SK-N-SH (cell line): ENCODE measurements at regions of chr2 and their contacts with region 1.

Region 1: DNA sequence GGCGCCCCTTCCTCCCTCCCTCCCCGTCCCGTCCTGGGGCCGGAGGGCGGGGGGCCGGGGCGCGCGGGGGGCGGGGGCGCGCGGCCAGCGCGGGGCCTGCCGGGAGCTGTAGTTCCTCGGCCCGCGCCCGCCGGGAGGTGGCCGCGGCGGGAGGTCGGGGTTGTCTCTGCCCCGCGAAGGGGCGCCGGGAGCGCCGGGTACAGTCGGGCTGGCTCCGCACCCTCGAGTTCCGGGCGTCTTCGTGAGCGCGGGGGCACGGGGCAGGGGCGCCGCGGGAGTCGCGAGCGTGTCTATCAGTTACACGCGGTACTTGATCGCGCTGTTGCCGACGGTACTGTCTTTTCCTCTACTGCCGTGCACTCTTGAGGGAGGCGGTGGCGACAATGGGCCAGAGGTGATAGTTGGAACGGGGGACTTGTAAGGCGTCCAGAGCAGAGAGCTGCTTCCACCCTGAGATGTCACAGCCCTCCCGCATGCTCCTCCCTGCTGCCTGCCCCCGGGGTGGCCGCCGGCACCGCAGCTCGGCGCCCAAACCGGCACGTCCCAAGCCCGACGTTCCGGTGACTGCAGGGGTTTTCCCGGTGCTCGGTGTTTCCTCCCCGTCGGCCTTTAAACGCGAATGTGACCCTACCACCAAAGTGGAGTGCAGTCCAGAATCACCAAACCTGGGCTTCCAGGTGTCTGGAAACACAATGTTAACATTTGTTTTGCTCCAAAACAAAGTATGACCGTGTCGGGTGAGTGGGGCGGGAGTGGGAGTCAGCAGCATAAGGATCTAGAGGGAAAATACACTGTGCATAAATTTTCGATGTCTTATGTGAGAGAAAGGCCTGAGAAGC is at the start of gene PRKD3:
- DNase-seq: peak; percentile 99
- H3K4me3 ChIP-seq: peak within 1 kb of the TSS; percentile 92 to 96
- H3K27ac ChIP-seq: peak within 1 kb of the TSS; percentile 74 to 93
- H3K4me1 ChIP-seq: peaks cover 21 to 51% of the 10 kb centered on the region in 2 experiments; a peak in 3 of 4 replicates
- H3K27me3 ChIP-seq: no peaks in the 10 kb centered on the region
- CTCF ChIP-seq: no peak
- EP300 ChIP-seq: no peak
- RAD21 ChIP-seq: no peak
- polyA plus RNA-seq, gene PRKD3: 15.9 and 17.5 TPM in 2 replicates

Region 2: GRCh38 chr2:37306024-37306423 is 19.0 kb before region 1 on chr2:
- CTCF ChIA-PET with region 1: interaction called, 20 read pairs
- POLR2A ChIA-PET with region 1: interaction called, 3 read pairs
- DNase-seq: no peak
- H3K4me3 ChIP-seq: no peak overlapping the region
- H3K27ac ChIP-seq: peak overlapping the region in 1 of 2 experiments; percentile 2; a peak in 1 of 4 replicates
- H3K4me1 ChIP-seq: peaks cover 7 to 15% of the 10 kb centered on the region in 2 experiments; a peak in 3 of 4 replicates
- H3K27me3 ChIP-seq: no peaks in the 10 kb centered on the region
- CTCF ChIP-seq: no peak
- EP300 ChIP-seq: no peak
- RAD21 ChIP-seq: no peak

Region 3: DNA sequence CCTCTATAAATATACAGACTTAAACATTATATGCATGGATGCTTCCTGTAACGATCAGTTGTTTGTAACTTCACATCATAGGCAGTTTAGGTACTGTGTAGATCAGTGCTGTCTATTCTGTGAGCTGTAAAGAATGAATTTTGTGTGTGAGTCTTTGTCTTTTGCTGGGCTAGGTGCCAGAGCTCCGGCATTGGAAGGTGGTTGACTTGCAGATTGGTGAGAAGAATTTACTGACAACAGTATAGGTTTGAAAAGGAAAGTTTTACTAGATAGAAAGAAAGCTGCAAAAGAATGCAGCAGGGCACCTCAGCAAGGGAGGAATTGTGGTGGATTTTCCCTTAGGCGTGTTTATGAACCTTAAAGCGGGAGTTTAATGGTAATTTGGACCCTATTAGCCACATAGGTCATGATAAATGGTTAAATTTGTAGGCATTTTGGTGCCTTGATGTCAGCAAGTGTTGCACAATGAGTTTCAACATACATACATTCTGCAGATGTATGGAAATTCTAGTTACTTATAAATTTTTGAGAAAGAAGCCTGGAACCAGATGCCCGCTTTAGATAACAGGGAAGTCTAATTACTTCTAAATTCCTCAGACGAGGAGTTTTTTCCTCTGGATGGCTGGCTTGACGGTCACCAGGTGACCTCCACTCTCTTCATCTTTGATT is 12.8 kb after region 1 on chr2:
- CTCF ChIA-PET with region 1: interaction called, 11 read pairs
- POLR2A ChIA-PET with region 1: no interaction called
- DNase-seq: no peak
- H3K4me3 ChIP-seq: no peak overlapping the region
- H3K27ac ChIP-seq: no peak overlapping the region
- H3K4me1 ChIP-seq: peaks cover 0 to 10% of the 10 kb centered on the region in 2 experiments; a peak in 2 of 4 replicates
- H3K27me3 ChIP-seq: no peaks in the 10 kb centered on the region
- CTCF ChIP-seq: no peak
- EP300 ChIP-seq: no peak
- RAD21 ChIP-seq: no peak